Panc1 (cell line): ENCODE measurements at regions of chr6 and their contacts with region 1.

Region 1: GRCh38 chr6:11233673-11234573 is 1.5 kb upstream of the NEDD9 start:
- DNase-seq: no peak
- ATAC-seq: no peak
- H3K4me3 ChIP-seq: no peak overlapping the region
- H3K27ac ChIP-seq: no peak overlapping the region
- H3K4me1 ChIP-seq: no peaks in the 10 kb centered on the region
- H3K27me3 ChIP-seq: peaks cover 12% of the 10 kb centered on the region; the same call in 1 of the 2 replicates
- CTCF ChIP-seq: no peak

Region 2: GRCh38 chr6:10771371-10771894 is 462.5 kb before region 1 on chr6:
- CTCF ChIA-PET with region 1: no interaction called
- POLR2A ChIA-PET with region 1: no interaction called
- in situ Hi-C with region 1: no loop called
- intact Hi-C with region 1: no loop called
- DNase-seq: no peak
- ATAC-seq: peak; percentile 42; the same call in 1 of the 2 replicates
- H3K4me3 ChIP-seq: no peak overlapping the region
- H3K27ac ChIP-seq: no peak overlapping the region
- H3K4me1 ChIP-seq: no peaks in the 10 kb centered on the region
- H3K27me3 ChIP-seq: no peaks in the 10 kb centered on the region
- CTCF ChIP-seq: no peak

Region 3: GRCh38 chr6:11410539-11411307 is 176.8 kb after region 1 on chr6:
- CTCF ChIA-PET with region 1: no interaction called
- POLR2A ChIA-PET with region 1: interaction called, 11 read pairs
- in situ Hi-C with region 1: no loop called
- intact Hi-C with region 1: no loop called
- DNase-seq: no peak
- ATAC-seq: no peak
- H3K4me3 ChIP-seq: no peak overlapping the region
- H3K27ac ChIP-seq: no peak overlapping the region
- H3K4me1 ChIP-seq: no peaks in the 10 kb centered on the region
- H3K27me3 ChIP-seq: no peaks in the 10 kb centered on the region
- CTCF ChIP-seq: no peak